HEK293T (cell line): ENCODE measurements at regions of chr3 and their contacts with region 1.

Region 1: GRCh38 chr3:56799251-56799882 is 2.4 kb downstream of the ARHGEF3 start:
- DNase-seq: no peak

Region 2: GRCh38 chr3:56519232-56519631 is 280.1 kb before region 1 on chr3:
- CTCF ChIA-PET with region 1: no interaction called
- POLR2A ChIA-PET with region 1: no interaction called
- DNase-seq: no peak

Region 3: DNA sequence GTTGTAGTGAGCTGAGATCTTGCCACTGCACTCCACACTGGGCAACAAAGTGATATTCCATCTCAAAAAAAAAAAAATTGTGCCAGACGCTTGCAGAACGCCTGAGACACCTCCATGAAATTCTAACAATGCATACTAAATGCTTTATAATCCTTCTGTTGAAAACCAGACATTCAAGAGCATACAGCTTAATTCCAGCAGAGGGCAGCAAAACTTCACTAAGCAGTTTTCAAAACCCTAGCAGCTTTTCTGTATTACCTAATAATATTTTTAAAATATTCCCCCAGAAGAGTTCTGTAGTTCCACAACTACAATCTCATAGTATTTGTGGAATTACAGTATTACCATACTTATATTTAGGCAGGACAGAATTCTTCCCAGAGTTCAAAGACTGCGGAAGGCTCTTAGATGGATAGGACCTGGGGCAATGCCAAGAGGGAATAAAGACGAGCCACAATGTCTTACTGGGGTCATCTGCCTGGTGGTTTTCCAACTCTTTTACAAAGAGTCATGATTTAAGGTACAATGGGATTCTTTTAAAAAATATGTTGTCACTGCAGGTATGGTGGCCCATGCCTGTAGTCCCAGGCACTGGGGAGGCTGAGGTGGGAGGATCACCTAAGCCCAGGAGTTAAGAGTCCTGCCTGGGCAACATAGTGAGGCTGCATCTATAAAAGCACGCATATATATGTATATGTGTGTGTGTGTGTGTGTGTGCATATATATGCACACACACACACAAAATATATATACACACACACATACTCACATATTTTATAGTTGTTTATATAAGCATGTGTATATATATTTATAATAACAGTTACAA is 96.7 kb before region 1 on chr3:
- CTCF ChIA-PET with region 1: interaction called, 10 read pairs
- POLR2A ChIA-PET with region 1: no interaction called
- DNase-seq: peak; percentile 49

Region 4: DNA sequence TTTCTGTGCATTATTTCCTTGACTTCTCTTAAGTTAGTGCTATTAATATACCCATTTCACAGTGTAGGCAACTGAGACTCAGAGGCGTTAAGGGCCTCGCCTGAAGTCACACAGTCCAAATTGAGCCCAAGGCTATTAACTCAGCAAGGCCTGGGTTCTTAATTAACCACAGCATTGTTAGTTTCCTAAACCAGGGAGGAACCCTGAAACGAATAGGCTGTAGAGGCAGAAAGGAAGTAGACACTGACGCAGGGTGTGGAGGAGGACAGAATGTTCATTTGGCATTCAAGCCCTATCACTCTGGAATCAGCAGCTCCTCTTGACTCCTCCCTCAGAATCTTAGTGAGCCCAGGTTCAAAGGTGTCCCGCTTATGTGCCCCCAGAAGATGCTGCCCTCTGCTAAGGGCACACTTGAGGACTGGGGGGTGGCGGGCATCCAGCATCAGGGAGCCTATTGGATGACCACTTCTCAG is 11.5 kb before region 1 on chr3:
- CTCF ChIA-PET with region 1: interaction called, 15 read pairs
- POLR2A ChIA-PET with region 1: interaction called, 4 read pairs
- DNase-seq: no peak

Region 5: GRCh38 chr3:56988458-56989168 is 189.2 kb after region 1 on chr3:
- CTCF ChIA-PET with region 1: interaction called, 22 read pairs
- POLR2A ChIA-PET with region 1: interaction called, 3 read pairs
- DNase-seq: peak; percentile 72